ENCODE measurements at regions of chr14 and their contacts with region 1.

Region 1: DNA sequence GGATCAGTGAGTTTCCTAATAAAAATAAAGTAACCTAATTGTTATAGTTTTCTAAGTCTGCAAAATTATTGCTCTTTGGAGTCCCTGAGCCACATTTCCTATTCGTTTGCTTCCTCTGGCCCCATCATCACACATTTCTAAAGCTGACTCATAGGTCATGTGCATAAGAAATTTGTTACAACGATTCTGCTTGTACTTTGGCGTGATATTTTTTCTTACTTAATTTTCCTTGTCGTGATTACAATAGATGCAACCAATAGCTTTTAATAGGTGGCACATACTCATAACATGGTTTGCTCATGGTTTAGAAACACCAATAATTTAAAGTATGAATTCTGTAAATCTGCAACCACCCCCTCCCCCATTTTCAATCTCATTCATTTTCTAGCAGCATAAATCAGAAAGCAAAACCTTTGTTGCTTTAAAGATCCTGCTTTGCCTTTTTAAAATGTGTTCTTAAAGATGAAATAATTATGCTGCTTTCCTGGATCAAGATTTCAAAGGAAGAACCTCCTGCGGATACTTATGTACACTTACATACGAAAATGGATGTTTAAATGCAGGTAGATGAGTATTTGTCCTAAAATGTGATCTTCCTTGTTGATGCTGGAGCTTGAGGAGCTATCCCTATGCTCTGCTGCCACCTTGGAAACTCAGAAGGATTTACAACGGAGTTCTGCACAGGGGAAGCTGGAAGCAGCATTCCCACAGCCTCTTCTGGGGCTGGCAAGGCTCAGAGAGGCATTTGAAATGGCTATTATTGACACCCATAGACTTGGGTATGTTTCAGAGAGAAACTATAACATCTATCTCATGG is 1.7 kb upstream of the FLRT2 start:
- DNase-seq: peak in 1 of 2 experiments; percentile 36
- H3K4me3 ChIP-seq: no peak overlapping the region
- H3K4me3 Mint-ChIP-seq: no peak overlapping the region
- H3K27ac Mint-ChIP-seq: no peak overlapping the region
- H3K4me1 ChIP-seq: peaks cover 8% of the 10 kb centered on the region
- H3K4me1 Mint-ChIP-seq: peaks cover 24% of the 10 kb centered on the region
- H3K27me3 ChIP-seq: no peaks in the 10 kb centered on the region
- H3K27me3 Mint-ChIP-seq: no peaks in the 10 kb centered on the region
- CTCF ChIP-seq: peak; percentile 22 to 53

Region 2: GRCh38 chr14:85195872-85196477 is 332.3 kb before region 1 on chr14:
- CTCF ChIA-PET with region 1: no interaction called
- POLR2A ChIA-PET with region 1: no interaction called
- intact Hi-C with region 1: loop called (anchors 1 kb)
- DNase-seq: peak in 1 of 2 experiments; percentile 3
- H3K4me3 ChIP-seq: no peak overlapping the region
- H3K4me3 Mint-ChIP-seq: no peak overlapping the region
- H3K27ac Mint-ChIP-seq: no peak overlapping the region
- H3K4me1 ChIP-seq: no peaks in the 10 kb centered on the region
- H3K4me1 Mint-ChIP-seq: no peaks in the 10 kb centered on the region
- H3K27me3 ChIP-seq: no peaks in the 10 kb centered on the region
- H3K27me3 Mint-ChIP-seq: no peaks in the 10 kb centered on the region
- CTCF ChIP-seq: peak; percentile 44 to 62

Region 3: GRCh38 chr14:85276979-85277228 is 251.4 kb before region 1 on chr14:
- CTCF ChIA-PET with region 1: no interaction called
- POLR2A ChIA-PET with region 1: no interaction called
- intact Hi-C with region 1: loop called (anchors 2 kb)
- DNase-seq: no peak
- H3K4me3 ChIP-seq: no peak overlapping the region
- H3K4me3 Mint-ChIP-seq: no peak overlapping the region
- H3K27ac Mint-ChIP-seq: no peak overlapping the region
- H3K4me1 ChIP-seq: no peaks in the 10 kb centered on the region
- H3K4me1 Mint-ChIP-seq: no peaks in the 10 kb centered on the region
- H3K27me3 ChIP-seq: no peaks in the 10 kb centered on the region
- H3K27me3 Mint-ChIP-seq: no peaks in the 10 kb centered on the region
- CTCF ChIP-seq: no peak

Region 4: DNA sequence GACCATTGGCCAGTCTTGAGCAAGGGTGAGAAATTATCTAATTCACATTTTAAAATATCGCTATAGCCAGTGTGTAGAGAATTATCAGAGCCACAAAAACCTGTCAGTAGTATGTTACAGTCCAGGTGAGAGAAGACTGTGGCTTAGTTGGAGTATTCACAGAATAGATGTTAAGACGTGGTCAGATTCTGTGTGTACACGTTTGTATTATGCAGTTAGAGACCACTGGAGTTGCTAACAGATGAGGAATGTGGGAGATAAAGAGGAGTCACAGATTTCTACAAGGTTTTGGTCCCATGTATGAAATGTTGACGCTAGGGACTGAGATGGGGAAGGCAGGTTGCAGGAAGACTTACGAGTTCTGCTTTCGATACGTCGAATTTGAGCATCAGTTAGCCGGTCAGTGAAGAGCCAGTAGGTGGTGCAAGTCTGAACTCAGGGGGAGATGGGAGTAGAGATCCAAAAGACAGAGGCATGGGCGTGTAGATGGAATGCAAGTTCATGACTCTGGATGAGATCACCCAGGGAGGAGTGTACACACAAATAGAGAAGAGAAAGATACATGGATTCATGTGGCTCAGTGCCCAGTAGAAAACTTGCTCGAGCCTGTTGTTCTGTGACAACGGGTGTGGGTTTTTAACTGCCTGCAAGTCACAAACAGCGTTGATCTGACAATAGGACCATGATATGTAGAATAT is 113.1 kb before region 1 on chr14:
- CTCF ChIA-PET with region 1: no interaction called
- POLR2A ChIA-PET with region 1: no interaction called
- intact Hi-C with region 1: loop called (anchors 2 kb)
- DNase-seq: peak; percentile 32 to 44
- H3K4me3 ChIP-seq: no peak overlapping the region
- H3K4me3 Mint-ChIP-seq: no peak overlapping the region
- H3K27ac Mint-ChIP-seq: no peak overlapping the region
- H3K4me1 ChIP-seq: no peaks in the 10 kb centered on the region
- H3K4me1 Mint-ChIP-seq: peaks cover 13% of the 10 kb centered on the region
- H3K27me3 ChIP-seq: no peaks in the 10 kb centered on the region
- H3K27me3 Mint-ChIP-seq: no peaks in the 10 kb centered on the region
- CTCF ChIP-seq: peak; percentile 16 to 21

Measured in Caco-2 (cell line).